Heart left ventricle (tissue), 16 donors: ENCODE measurements at regions of chr13 and their contacts with region 1.

Region 1: GRCh38 chr13:105327581-105328126 is 1207.8 kb downstream of the EFNB2 start:
- DNase-seq: no peak
- ATAC-seq: no peak
- H3K4me3 ChIP-seq: no peak overlapping the region
- H3K27ac ChIP-seq: no peak overlapping the region
- H3K4me1 ChIP-seq: no peaks in the 10 kb centered on the region
- H3K27me3 ChIP-seq: no peaks in the 10 kb centered on the region
- CTCF ChIP-seq: no peak
- POLR2A ChIP-seq: no peak

Region 2: GRCh38 chr13:105177265-105177900 is 150.3 kb before region 1 on chr13:
- intact Hi-C with region 1: no loop called
- DNase-seq: no peak
- ATAC-seq: no peak
- H3K4me3 ChIP-seq: no peak overlapping the region
- H3K27ac ChIP-seq: no peak overlapping the region
- H3K4me1 ChIP-seq: peaks cover 0 to 5% (median 0%) of the 10 kb centered on the region in 12 donors
- H3K27me3 ChIP-seq: no peaks in the 10 kb centered on the region
- CTCF ChIP-seq: no peak
- POLR2A ChIP-seq: no peak

Region 3: DNA sequence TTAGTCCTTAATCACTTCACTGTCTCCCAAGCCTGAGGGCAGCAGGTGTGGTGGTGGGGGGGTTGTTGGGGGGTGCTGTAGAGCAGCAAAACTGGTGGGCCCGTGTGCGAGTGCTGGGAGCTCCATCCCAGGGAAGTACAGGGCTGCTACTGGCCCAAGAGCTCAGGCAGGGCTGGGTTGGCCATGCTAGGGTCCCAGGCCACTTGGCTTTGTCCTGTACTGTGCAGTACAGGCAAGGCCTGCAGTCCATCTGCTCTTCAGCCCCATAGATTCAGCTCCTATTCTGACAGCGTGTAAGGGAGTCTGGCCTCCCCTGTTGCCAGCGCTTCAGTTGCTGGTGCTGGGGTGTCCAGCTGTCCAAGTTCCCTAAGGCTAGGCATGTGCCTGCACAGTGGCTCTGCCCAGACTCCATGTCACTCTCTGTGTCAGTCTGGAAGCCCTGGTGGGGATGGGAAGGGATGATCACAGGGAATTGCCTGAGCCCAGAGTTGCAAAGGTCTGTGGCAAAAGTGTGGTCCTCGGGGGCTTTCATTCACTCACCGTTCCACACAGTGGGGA is 53.9 kb before region 1 on chr13:
- intact Hi-C with region 1: loop called in 1 of 10 experiments (anchors 2 kb)
- DNase-seq: no peak
- ATAC-seq: no peak
- H3K4me3 ChIP-seq: no peak overlapping the region
- H3K27ac ChIP-seq: no peak overlapping the region
- H3K4me1 ChIP-seq: no peaks in the 10 kb centered on the region
- H3K27me3 ChIP-seq: no peaks in the 10 kb centered on the region
- CTCF ChIP-seq: no peak
- POLR2A ChIP-seq: no peak

Region 4: DNA sequence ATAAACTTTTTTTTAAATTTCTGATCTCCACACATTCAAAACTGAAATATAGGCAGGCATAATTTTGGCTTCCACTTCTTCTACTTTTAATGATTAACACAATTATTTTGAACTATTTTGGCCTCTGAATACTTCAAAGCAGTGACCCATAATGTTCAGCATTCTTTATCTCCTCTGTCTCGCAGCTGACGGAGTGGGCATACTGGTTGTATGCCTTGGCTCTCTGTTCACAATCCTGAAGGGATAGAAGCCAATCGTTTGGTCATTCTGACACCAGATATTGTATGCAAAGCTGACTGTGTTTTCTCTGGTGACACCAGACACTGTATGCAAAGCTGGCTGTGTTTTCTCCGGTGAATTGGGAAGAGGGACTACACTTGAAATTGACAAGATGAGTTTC is 374.8 kb after region 1 on chr13:
- intact Hi-C with region 1: no loop called
- DNase-seq: no peak
- ATAC-seq: no peak
- H3K4me3 ChIP-seq: no peak overlapping the region
- H3K27ac ChIP-seq: no peak overlapping the region
- H3K4me1 ChIP-seq: no peaks in the 10 kb centered on the region
- H3K27me3 ChIP-seq: no peaks in the 10 kb centered on the region
- CTCF ChIP-seq: no peak
- POLR2A ChIP-seq: no peak